ENCODE measurements at regions of chr4 and their contacts with region 1.

Region 1: DNA sequence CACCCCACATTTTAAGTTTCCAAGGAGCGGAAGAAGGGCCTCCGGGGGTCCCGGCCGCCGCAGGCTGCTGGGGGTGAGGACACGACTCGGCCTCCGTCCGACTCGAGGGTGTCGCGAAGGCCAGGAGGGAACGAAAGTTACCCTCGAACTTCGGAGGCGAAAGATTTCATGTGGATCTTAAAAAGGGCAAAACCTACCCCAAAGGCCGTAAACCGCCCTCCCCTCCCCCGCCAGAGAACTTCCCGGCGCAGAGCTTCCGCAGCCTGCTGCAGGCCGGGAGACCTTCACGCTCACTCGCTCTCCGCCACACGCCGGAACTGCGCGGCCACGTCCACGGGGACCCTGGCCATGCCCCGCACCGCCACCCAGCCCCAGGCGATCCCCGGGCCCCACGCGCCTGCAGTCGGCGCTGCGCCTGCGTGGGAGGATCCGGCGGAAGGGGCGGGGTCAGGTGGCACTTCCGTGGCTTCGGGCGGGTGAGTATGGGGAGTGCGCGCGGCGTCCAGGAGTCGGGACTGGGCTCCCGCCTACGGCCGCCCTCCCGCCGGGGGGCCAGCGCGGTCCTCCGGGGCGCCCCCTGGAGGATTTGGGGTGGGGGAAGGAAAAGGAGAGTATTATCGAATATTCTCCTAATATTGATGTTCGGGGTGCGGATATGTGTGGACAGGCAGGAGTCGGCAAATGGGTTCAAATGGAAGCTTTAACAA is at the start of gene MMAA:
- DNase-seq: peak; percentile 95
- H3K4me3 Mint-ChIP-seq: peak within 1 kb of the TSS; percentile 97
- H3K27ac Mint-ChIP-seq: peak within 1 kb of the TSS; percentile 99
- H3K4me1 Mint-ChIP-seq: peaks cover 49% of the 10 kb centered on the region
- H3K27me3 Mint-ChIP-seq: peaks cover 2% of the 10 kb centered on the region
- total RNA-seq, gene MMAA: 18.1 and 20.8 TPM in 2 replicates

Region 2: GRCh38 chr4:144174401-144175067 is 1444.6 kb before region 1 on chr4:
- intact Hi-C with region 1: loop called (anchors 2 kb)
- DNase-seq: peak; percentile 19
- H3K4me3 Mint-ChIP-seq: peak overlapping the region; percentile 40
- H3K27ac Mint-ChIP-seq: peak overlapping the region; percentile 70
- H3K4me1 Mint-ChIP-seq: peaks cover 37% of the 10 kb centered on the region
- H3K27me3 Mint-ChIP-seq: peaks cover 4% of the 10 kb centered on the region

Region 3: DNA sequence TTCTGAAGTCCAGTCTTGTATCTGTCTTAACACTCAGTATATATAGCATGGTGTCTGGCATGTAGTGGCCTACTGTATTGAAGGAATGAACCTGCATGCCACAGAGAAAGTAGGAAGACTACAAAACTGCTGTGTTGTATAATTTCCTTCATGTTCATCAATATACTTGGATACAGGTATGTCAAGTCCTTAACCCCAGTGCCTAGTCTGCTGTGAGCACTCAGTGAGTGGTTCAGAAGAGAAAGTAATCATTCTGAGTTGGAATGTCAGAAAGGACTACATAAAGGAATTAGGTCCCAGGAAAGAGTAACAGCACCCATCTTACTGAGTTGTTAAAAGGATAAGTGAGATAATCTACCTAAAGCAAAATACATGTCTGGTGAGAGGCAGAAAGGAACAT is 489.0 kb before region 1 on chr4:
- intact Hi-C with region 1: no loop called
- DNase-seq: no peak
- H3K4me3 Mint-ChIP-seq: peak overlapping the region; percentile 4
- H3K27ac Mint-ChIP-seq: peak overlapping the region; percentile 78
- H3K4me1 Mint-ChIP-seq: peaks cover 87% of the 10 kb centered on the region
- H3K27me3 Mint-ChIP-seq: no peaks in the 10 kb centered on the region

Region 4: DNA sequence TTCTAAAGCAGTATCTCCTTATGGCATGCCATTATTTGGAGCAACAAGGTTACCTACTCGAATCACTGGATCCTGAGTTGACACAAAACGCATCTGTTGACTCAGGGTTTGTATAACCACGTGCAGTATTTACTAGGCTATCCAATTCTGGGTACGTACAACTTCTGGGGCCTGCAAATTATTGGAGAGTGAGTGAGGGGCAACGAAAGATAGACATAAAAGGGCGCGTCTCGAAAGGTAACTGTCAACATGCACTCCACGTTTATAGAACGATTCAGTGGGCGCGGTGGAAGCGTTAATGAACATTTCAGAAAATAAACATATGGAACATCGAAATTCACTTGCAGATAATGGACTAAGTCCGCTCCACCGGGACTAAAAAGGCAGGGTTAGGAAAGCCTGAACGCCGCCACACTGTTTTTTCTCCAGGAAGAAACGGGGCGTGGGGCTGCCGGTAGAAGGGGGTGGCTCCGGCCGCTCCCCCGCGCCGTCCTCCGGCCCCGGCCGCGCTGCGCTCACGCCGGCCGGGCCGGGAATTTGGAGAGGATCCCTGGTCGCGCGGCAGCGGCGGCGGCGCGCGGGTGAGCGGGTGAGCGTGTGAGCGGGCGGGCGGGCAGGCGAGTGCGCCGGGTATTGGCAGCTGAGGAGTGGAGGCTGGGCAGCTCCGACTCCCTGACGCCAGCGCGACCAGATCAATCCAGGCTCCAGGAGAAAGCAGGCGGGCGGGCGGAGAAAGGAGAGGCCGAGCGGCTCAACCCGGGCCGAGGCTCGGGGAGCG is 137.7 kb before region 1 on chr4 and contains the start of gene SMAD1:
- intact Hi-C with region 1: loop called (anchors 1 kb)
- DNase-seq: peak; percentile 11
- H3K4me3 Mint-ChIP-seq: peak within 1 kb of the TSS; percentile 73
- H3K27ac Mint-ChIP-seq: peak within 1 kb of the TSS; percentile 49
- H3K4me1 Mint-ChIP-seq: peaks cover 6% of the 10 kb centered on the region
- H3K27me3 Mint-ChIP-seq: peaks cover 33% of the 10 kb centered on the region
- total RNA-seq, gene SMAD1: 3.1 and 3.2 TPM in 2 replicates

Region 5: DNA sequence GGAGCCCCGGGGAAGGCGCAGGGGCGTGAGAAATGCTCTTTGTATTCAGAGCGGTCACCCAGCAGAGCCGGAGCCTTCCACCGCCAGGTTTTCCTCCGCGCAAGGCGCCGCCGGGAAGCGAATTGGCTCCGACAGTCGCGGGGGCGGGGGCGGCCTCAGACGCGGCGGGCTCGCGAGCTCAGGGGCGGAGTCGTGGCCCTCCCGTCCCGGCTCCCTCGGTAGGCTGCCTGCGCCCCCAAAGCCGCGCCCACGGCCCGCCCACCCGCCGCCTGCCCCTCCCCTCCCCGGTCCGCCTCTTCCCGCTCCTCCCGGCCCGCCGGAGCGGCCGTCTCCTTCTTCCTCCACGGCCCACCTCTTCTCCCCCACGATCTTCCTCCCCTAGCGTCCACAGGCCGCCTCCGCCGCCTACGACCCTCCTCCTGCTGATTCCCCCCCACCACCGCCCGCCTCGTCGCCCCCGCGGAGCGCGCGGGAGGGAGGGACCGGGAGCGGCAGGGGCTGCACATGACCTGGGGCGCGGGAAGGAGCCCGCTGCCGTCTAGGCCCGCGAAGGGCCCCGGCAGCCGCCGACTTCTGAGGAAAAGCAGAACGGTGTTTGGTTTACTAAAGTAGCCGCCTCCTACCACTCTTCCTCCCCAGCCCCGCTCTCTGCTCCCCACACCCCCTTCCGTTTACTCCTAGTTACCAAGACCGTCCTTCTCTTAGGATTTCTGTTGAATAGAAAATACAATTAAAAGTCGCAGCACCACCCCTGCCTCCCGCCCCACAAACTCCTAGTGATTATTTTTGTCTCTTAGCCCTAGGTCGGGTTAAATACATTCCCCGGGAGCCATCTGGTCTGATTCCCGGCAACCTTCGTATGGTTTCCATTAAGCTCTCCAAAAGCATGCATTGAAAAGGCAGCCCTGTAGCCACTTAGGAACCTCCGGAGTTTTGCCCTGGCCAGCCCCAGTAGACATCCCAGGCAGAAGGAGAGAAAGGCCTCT is 114.1 kb after region 1 on chr4:
- intact Hi-C with region 1: loop called (anchors 1 kb)
- DNase-seq: peak; percentile 82
- H3K4me3 Mint-ChIP-seq: peak overlapping the region; percentile 79
- H3K27ac Mint-ChIP-seq: peak overlapping the region; percentile 24
- H3K4me1 Mint-ChIP-seq: peaks cover 10% of the 10 kb centered on the region
- H3K27me3 Mint-ChIP-seq: peaks cover 3% of the 10 kb centered on the region

Region 6: GRCh38 chr4:145815626-145816025 is 196.5 kb after region 1 on chr4:
- intact Hi-C with region 1: loop called (anchors 1 kb)
- DNase-seq: no peak
- H3K4me3 Mint-ChIP-seq: peak overlapping the region; percentile 43
- H3K27ac Mint-ChIP-seq: peak overlapping the region; percentile 86
- H3K4me1 Mint-ChIP-seq: peaks cover 51% of the 10 kb centered on the region
- H3K27me3 Mint-ChIP-seq: no peaks in the 10 kb centered on the region

Region 7: GRCh38 chr4:146029939-146030710 is 411.0 kb after region 1 on chr4:
- intact Hi-C with region 1: loop called (anchors 5 kb)
- DNase-seq: no peak
- H3K4me3 Mint-ChIP-seq: no peak overlapping the region
- H3K27ac Mint-ChIP-seq: no peak overlapping the region
- H3K4me1 Mint-ChIP-seq: peaks cover 12% of the 10 kb centered on the region
- H3K27me3 Mint-ChIP-seq: peaks cover 10% of the 10 kb centered on the region

Region 8: GRCh38 chr4:146522098-146522868 is 903.2 kb after region 1 on chr4:
- intact Hi-C with region 1: loop called (anchors 1 kb)
- DNase-seq: peak; percentile 79
- H3K4me3 Mint-ChIP-seq: no peak overlapping the region
- H3K27ac Mint-ChIP-seq: no peak overlapping the region
- H3K4me1 Mint-ChIP-seq: peaks cover 31% of the 10 kb centered on the region
- H3K27me3 Mint-ChIP-seq: no peaks in the 10 kb centered on the region

Measured in activated T-helper 1 cell treated with anti-CD3 and anti-CD28 coated beads, Interleukin-12 subunit alpha, Interleukin-12 subunit beta, Interleukin-2, Interleukin-4 antibody, amounts not matched to agents 30 ng/mL and 10 ng/mL and 1 ng/mL, durations not matched to agents 14 hours and 24 hours and 36 hours (primary cell).